ENCODE measurements at regions of chr9 and their contacts with region 1.

Region 1: DNA sequence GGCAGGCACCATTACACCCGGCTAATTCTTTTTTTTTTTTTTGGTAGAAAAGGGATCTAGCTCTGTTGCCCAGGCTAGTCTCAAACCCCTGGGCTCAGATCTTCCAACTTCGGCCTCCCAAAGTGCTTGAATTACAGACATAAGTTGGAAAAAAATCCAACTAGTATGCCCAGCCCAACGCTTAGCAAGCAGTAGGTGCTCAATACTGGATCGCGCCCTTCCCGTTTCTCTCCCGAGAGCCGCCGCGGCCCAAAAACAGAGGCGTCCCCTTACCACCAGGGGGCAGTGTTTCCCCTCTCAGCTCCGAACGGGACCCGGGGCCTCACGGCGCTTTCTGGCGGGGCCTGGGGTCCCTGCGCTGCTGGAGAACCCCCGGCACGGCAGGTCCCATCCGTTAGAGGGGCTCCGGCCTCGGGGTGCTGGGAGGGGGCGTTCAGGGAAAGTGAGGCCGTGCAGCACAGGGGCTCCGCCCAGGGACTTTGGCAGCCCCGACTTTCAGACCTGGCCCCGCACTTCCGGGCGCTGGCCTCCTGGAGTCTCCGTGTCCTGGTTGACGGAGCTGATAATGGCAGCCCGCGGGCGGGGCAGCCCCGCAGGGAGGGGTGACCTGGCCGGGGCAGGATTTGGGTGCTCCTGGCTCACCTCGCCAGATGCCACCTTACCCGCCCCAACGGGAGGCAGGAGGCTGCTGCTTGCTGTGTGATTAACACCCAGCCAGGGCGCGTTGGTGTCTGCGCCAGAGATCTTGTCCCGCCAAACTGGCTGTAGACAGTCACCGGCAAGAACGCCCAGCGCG is 15.2 kb downstream of the PTGES start:
- DNase-seq: peak; percentile 89
- H3K4me3 Mint-ChIP-seq: peak overlapping the region; percentile 60
- H3K27ac Mint-ChIP-seq: peak overlapping the region; percentile 84
- H3K4me1 Mint-ChIP-seq: peaks cover 12% of the 10 kb centered on the region
- H3K27me3 Mint-ChIP-seq: peaks cover 2% of the 10 kb centered on the region

Region 2: GRCh38 chr9:129726322-129727160 is 11.1 kb before region 1 on chr9:
- CTCF ChIA-PET with region 1: interaction called, 28 read pairs
- POLR2A ChIA-PET with region 1: no interaction called
- DNase-seq: peak; percentile 60
- H3K4me3 Mint-ChIP-seq: peak overlapping the region; percentile 27
- H3K27ac Mint-ChIP-seq: peak overlapping the region; percentile 36
- H3K4me1 Mint-ChIP-seq: peaks cover 4% of the 10 kb centered on the region
- H3K27me3 Mint-ChIP-seq: peaks cover 11% of the 10 kb centered on the region

Region 3: GRCh38 chr9:129757045-129757444 is 19.4 kb after region 1 on chr9:
- CTCF ChIA-PET with region 1: interaction called, 19 read pairs
- POLR2A ChIA-PET with region 1: no interaction called
- DNase-seq: no peak
- H3K4me3 Mint-ChIP-seq: no peak overlapping the region
- H3K27ac Mint-ChIP-seq: no peak overlapping the region
- H3K4me1 Mint-ChIP-seq: peaks cover 25% of the 10 kb centered on the region
- H3K27me3 Mint-ChIP-seq: peaks cover 6% of the 10 kb centered on the region

Region 4: GRCh38 chr9:129776938-129777768 is 39.5 kb after region 1 on chr9:
- CTCF ChIA-PET with region 1: interaction called, 45 read pairs
- POLR2A ChIA-PET with region 1: no interaction called
- DNase-seq: peak; percentile 40
- H3K4me3 Mint-ChIP-seq: no peak overlapping the region
- H3K27ac Mint-ChIP-seq: no peak overlapping the region
- H3K4me1 Mint-ChIP-seq: peaks cover 12% of the 10 kb centered on the region
- H3K27me3 Mint-ChIP-seq: peaks cover 7% of the 10 kb centered on the region

Region 5: GRCh38 chr9:129783516-129784361 is 46.1 kb after region 1 on chr9:
- CTCF ChIA-PET with region 1: interaction called, 45 read pairs
- POLR2A ChIA-PET with region 1: no interaction called
- DNase-seq: peak; percentile 83
- H3K4me3 Mint-ChIP-seq: no peak overlapping the region
- H3K27ac Mint-ChIP-seq: no peak overlapping the region
- H3K4me1 Mint-ChIP-seq: peaks cover 4% of the 10 kb centered on the region
- H3K27me3 Mint-ChIP-seq: peaks cover 5% of the 10 kb centered on the region

Region 6: DNA sequence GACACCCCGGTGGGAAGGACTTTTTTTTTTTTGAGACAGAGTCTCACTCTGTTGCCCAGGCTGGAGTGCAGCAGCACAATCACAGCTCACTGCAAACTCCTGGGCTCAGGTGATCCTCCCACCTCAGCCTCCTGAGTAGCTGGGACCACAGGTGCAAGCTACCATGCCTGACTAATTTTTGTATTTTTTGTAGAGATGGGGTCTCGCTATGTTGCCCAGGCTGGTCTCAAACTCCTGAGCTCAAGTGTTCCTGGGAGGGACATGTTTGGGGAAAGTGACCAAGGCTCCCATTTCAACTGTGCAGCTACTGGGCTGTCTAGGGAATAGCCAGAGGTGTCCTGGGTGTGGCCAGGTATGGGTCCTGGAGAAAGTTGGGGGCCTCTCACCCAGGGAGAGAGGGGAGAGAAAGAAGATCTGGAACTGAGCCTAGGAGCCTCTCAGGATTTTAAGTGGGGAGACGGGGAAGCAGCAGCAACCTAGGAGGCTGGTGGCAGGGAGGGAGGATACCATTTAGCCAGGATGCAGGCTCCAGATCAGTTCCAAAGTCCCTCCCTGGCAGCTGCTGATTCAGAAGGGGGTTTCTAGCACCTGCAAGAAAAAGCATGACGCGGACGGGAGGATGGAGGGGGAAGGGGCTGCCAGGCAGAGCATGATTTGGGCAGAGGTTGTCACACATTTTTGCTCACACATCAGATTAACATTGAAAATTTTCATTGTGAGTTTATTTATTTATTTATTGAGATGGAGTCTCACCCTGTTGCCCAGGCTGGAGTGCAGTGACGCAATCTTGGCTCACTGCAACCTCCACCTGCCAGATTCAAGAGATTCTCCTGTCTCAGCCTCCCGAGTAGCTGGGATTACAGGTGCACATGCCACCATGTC is 58.6 kb after region 1 on chr9:
- CTCF ChIA-PET with region 1: interaction called, 12 read pairs
- POLR2A ChIA-PET with region 1: no interaction called
- DNase-seq: no peak
- H3K4me3 Mint-ChIP-seq: no peak overlapping the region
- H3K27ac Mint-ChIP-seq: no peak overlapping the region
- H3K4me1 Mint-ChIP-seq: peaks cover 3% of the 10 kb centered on the region
- H3K27me3 Mint-ChIP-seq: no peaks in the 10 kb centered on the region

Measured in activated CD4-positive, alpha-beta T cell treated with anti-CD3 and anti-CD28 coated beads, Interleukin-2, amount 10 ng/mL, durations not matched to agents 7 days and 5 days (primary cell).